AG04450 (cell line): ENCODE measurements at regions of chr2 and their contacts with region 1.

Region 1: GRCh38 chr2:135709992-135710391 is 31.7 kb upstream of the UBXN4 start:
- DNase-seq: no peak
- H3K4me3 ChIP-seq: no peak overlapping the region
- H3K27ac ChIP-seq: no peak overlapping the region
- H3K27me3 ChIP-seq: no peaks in the 10 kb centered on the region
- CTCF ChIP-seq: peak; percentile 94

Region 2: GRCh38 chr2:134988994-134989605 is 720.9 kb before region 1 on chr2:
- CTCF ChIA-PET with region 1: interaction called, 57 read pairs
- POLR2A ChIA-PET with region 1: no interaction called
- DNase-seq: peak; percentile 3
- H3K4me3 ChIP-seq: no peak overlapping the region
- H3K27ac ChIP-seq: no peak overlapping the region
- H3K27me3 ChIP-seq: peaks cover 12% of the 10 kb centered on the region
- CTCF ChIP-seq: peak; percentile 54

Region 3: DNA sequence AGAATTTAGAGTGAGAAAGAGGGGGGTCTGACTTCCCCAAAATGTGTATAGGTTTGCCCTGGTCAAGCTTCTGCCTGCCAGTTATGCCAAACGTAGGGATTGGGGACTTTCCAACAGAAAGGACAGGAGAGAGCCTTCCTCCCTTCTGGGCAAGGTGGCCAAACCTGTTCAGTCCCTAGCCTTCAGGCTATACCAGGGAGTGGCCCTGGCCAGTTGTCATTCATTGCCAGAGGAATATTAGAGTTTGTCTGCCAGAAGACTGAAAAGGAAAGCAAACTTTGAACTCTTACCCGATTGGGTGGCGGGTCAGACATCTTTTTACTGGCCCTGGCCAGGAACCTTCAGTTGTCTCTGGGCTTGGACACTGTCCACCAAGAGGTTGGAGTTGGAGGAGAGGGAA is 635.8 kb before region 1 on chr2:
- CTCF ChIA-PET with region 1: no interaction called
- POLR2A ChIA-PET with region 1: no interaction called
- DNase-seq: no peak
- H3K4me3 ChIP-seq: no peak overlapping the region
- H3K27ac ChIP-seq: no peak overlapping the region
- H3K27me3 ChIP-seq: no peaks in the 10 kb centered on the region
- CTCF ChIP-seq: no peak

Region 4: GRCh38 chr2:135113322-135113721 is 596.7 kb before region 1 on chr2:
- CTCF ChIA-PET with region 1: no interaction called
- POLR2A ChIA-PET with region 1: no interaction called
- DNase-seq: no peak
- H3K4me3 ChIP-seq: no peak overlapping the region
- H3K27ac ChIP-seq: no peak overlapping the region
- H3K27me3 ChIP-seq: no peaks in the 10 kb centered on the region
- CTCF ChIP-seq: no peak

Region 5: DNA sequence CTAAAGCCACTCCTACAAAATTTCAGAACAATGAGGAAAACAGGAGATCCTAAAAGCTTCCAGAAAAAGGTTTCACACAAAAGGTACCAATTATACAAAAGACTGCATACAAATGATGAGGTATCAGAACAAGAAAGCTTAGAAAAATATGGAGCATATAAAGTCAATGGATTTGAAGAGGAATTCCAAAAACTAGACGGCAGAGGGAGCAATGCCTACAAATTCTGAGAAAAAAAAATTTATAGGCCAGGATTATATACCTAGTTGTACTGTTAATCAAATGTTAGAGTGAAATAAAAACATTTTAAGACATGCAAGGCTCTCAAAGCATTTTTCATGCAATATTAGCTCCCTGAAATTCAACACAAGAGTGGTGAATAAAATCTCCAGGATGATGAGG is 285.2 kb before region 1 on chr2:
- CTCF ChIA-PET with region 1: interaction called, 16 read pairs
- POLR2A ChIA-PET with region 1: no interaction called
- DNase-seq: no peak
- H3K4me3 ChIP-seq: no peak overlapping the region
- H3K27ac ChIP-seq: no peak overlapping the region
- H3K27me3 ChIP-seq: no peaks in the 10 kb centered on the region
- CTCF ChIP-seq: peak; percentile 22; the same call in 1 of the 2 replicates

Region 6: DNA sequence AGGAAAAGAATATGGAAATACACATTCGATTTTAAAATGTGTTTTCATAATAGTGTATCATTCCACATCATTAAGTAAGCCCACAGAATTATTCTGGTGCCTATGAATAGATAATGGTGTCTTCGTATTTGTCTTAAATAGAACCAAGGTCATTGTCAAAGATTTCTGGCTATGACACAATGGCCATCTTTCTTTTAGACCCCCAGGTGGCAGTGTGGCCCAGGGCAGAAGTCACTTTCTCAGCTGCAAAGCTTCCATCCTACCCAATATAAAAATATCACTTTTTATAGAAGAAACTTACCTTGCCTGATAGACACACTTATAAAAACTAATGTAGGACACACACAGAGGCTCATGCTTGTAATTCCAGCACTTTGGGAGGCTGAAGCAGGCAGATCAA is 236.4 kb before region 1 on chr2:
- CTCF ChIA-PET with region 1: interaction called, 21 read pairs
- POLR2A ChIA-PET with region 1: no interaction called
- DNase-seq: no peak
- H3K4me3 ChIP-seq: no peak overlapping the region
- H3K27ac ChIP-seq: no peak overlapping the region
- H3K27me3 ChIP-seq: no peaks in the 10 kb centered on the region
- CTCF ChIP-seq: peak; percentile 49

Region 7: DNA sequence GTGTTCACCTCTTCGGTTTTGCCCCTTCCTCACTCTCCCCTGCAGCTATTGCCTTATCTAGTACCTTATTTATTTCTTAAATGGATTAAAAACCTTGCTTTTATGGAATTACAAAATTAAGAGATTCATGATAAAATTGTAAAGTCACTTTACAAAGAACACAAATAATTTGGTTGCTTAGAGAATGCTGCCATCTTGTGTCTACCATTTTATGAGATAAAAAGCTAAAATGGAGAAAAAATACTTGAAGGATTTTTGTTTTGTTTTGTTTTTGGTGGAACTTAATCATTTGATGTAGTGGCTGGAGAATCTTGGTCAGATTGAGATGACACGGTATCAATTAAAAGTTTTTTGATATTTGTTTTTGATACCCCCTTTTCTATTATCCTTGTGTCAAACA is 109.1 kb before region 1 on chr2:
- CTCF ChIA-PET with region 1: interaction called, 11 read pairs
- POLR2A ChIA-PET with region 1: no interaction called
- DNase-seq: no peak
- H3K4me3 ChIP-seq: no peak overlapping the region
- H3K27ac ChIP-seq: no peak overlapping the region
- H3K27me3 ChIP-seq: no peaks in the 10 kb centered on the region
- CTCF ChIP-seq: 0 out of 2 replicates have a peak, but pooled peaks have one; percentile 27